GM18951 (cell line): ENCODE measurements at regions of chr17 and their contacts with region 1.

Region 1: GRCh38 chr17:67376737-67377487 is at the start of gene PITPNC1:
- POLR2A ChIP-seq: peak; percentile 62

Region 2: GRCh38 chr17:67615011-67615561 is 238.2 kb after region 1 on chr17:
- in situ Hi-C with region 1: loop called (anchors 10 kb)
- POLR2A ChIP-seq: no peak

Region 3: DNA sequence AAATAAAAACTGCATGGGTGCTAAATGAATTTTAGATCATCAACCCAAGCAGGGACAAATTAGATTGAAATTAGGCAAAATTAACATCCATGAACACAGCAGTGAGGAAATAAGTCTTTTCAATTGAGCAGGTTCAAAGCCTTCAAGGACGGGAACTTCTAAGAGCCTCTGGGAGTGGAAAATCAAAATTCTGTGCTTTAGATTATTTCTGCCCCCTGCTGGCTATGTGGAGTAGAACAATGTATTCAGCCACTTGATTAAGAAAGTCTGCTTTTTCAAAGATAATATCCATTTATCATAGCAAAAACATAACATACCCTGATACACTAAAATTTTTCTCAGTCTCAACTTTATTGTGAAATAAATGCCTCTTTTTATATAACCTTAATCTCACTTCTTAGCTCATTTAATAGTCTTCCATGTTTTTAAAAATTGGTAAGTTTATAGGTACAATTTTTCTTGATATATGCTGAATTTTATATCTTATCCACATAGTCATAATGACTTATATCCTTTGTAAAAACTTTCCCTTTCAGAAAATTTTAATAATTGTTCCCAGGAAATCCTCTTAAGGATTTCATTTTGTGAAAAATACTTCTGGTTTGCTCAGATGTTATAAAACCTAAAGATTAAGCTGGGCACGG is 312.7 kb after region 1 on chr17:
- in situ Hi-C with region 1: loop called (anchors 10 kb)
- POLR2A ChIP-seq: no peak